RWPE1 (cell line): ENCODE measurements at regions of chr19 and their contacts with region 1.

Region 1: DNA sequence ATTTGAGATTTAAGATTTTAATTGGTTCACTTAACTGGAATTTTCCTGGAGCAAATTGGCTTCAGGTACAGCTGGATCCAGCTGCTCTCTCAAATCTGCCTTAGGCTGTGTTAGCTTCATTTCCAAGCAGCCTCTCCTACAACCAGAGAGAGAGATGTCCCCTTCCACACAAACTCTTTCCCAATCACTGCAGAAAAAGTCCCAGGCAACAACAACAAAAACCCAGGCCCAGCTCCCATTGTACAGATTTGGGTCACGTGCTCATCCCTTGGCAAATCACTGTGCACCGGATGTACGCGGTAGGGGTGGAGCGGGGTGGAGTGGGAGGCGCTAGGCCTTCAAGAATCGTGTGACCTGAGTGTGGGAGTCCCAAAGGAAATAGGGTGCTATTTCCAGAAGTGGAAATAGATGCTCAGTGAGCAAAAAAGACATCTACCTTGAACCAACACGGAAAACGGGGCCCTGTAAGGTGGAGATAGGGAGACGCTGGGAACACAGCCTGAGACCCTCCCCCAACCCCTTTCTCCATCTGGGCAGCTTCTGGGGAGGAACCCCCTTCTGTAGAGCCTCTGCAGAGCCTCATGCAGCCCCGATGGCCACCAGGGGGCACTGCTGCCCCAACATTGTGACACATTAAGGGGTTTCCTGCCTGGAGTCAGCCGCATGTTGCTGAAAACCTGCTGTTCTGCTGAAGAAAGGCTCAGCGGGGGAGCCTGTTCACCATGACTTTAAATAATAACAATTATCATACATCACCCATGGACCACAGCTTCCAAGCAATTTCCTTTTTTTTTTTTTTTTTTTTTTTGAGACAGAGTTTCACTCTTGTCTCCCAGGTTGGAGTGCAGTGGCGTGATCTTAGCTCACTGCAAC is 25.4 kb downstream of the HPN start:
- DNase-seq: peak; percentile 70
- H3K27ac ChIP-seq: peak overlapping the region; percentile 28
- CTCF ChIP-seq: peak; percentile 82

Region 2: DNA sequence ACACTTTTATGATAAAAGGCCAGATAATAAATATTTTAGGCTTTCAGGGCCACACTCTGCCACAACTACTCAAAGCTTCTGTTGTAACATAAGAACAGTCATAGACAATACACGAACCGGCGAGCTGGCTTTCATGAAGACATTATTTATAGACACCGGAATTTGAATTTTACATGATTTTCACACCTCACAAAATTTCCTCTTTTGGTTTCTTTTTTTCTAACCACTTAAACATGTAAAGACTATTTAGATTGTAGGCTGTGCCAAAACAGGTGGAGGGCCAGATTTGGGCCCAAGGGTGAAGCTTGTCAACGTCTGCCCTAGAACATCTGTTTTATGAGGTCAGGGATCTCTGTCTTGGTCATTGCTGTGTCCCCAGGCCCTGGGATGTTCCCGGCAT is 19.0 kb after region 1 on chr19:
- CTCF ChIA-PET with region 1: interaction called, 13 read pairs
- POLR2A ChIA-PET with region 1: no interaction called
- DNase-seq: no peak
- H3K27ac ChIP-seq: no peak overlapping the region
- CTCF ChIP-seq: no peak

Region 3: DNA sequence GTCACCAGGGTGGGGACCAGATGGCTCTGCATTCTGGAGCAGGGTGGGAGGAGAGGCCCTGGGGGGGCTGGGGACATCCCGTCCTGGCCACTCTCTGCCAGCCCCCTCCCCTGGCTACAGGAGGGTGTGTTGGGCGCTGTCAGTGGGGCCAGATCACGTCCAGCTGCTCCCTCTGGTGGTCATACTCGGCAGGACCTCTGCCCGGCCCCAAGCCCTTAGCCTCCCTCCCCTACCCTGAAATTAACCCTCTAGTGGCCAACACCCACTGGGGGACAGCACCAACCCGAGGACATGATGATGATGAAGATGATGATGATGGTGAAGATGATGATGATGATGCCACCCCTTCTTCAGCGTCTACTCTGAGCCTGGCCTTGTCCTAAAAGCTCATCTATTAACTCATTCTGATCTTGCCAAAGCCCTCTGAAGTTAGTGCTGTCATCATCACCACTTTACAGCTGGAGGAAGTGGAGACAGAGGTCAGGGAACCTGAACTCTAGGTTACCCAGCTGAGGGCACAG is 68.5 kb after region 1 on chr19:
- CTCF ChIA-PET with region 1: interaction called, 42 read pairs
- POLR2A ChIA-PET with region 1: no interaction called
- DNase-seq: peak; percentile 77
- H3K27ac ChIP-seq: 0 out of 2 replicates have a peak overlapping the region, but pooled peaks have one; percentile 17
- CTCF ChIP-seq: peak; percentile 88

Region 4: GRCh38 chr19:35140962-35141637 is 74.2 kb after region 1 on chr19:
- CTCF ChIA-PET with region 1: interaction called, 42 read pairs
- POLR2A ChIA-PET with region 1: no interaction called
- DNase-seq: peak; percentile 99
- H3K27ac ChIP-seq: no peak overlapping the region; the same call in 1 of the 2 replicates
- CTCF ChIP-seq: peak; percentile 82